Gastrocnemius medialis (tissue), 4 donors: ENCODE measurements at regions of chr10 and their contacts with region 1.

Region 1: DNA sequence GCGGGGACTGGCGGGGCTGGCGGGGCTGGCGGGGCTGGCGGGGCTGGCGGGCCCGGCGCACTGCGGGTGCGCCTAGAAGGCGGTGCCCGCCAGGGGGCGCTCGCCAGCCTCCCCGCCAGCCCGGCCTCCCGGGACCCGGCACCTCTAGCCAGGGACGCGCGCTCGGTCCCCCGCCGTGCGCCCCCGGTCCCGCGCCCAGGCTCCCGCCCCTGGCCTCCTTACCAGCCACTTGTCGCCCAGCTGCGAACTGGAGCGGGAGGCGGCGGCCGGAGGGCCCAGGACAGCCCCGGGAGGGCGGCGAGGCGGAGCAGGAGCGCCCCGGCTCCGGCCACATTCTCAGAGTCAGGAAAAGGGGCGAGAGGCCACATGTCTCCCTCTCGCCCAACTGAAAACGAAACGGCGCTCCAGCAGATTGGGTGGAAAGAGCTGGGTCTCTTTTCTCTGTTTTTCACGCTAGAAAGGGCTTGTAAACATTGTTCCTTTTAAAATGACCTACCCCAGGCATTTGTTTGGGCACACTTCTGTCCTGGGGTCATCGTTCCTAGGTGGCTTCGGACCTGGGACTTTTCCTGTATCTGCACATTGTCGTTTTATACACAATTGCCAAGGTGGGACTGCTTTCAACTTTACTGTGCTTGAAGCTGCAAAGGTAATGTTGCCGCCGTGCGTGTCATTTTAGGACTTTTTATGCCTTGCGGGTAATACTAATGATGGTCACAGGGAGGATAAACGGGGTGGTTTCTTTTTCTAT is 378 bp upstream of the PRKCQ start:
- DNase-seq: peak; percentile 65 to 86
- ATAC-seq: peak; percentile 71 to 72
- H3K4me3 ChIP-seq: peak overlapping the region; percentile 69 to 74 (median 73)
- H3K27ac ChIP-seq: peak overlapping the region; percentile 93 to 96 (median 94)
- H3K4me1 ChIP-seq: peaks cover 15 to 18% of the 10 kb centered on the region in 2 donors
- H3K27me3 ChIP-seq: no peaks in the 10 kb centered on the region
- CTCF ChIP-seq: peak in 4 of 5 experiments; percentile 76 to 92 (median 90)
- POLR2A ChIP-seq: peak; percentile 92

Region 2: GRCh38 chr10:5684318-5684970 is 896.0 kb before region 1 on chr10 and contains the start of gene TASOR2:
- in situ Hi-C with region 1: no loop called
- intact Hi-C with region 1: loop called (anchors 10 kb)
- DNase-seq: peak; percentile 95 to 97
- ATAC-seq: peak; percentile 95 to 96
- H3K4me3 ChIP-seq: peak within 1 kb of the TSS; percentile 72 to 98 (median 90)
- H3K27ac ChIP-seq: peak within 1 kb of the TSS; percentile 88 to 96 (median 92)
- H3K4me1 ChIP-seq: peaks cover 19 to 24% of the 10 kb centered on the region in 2 donors
- H3K27me3 ChIP-seq: no peaks in the 10 kb centered on the region
- CTCF ChIP-seq: no peak
- POLR2A ChIP-seq: peak; percentile 76 to 79
- total RNA-seq, gene TASOR2: 32.0 to 78.0 (median 50.0) TPM

Region 3: DNA sequence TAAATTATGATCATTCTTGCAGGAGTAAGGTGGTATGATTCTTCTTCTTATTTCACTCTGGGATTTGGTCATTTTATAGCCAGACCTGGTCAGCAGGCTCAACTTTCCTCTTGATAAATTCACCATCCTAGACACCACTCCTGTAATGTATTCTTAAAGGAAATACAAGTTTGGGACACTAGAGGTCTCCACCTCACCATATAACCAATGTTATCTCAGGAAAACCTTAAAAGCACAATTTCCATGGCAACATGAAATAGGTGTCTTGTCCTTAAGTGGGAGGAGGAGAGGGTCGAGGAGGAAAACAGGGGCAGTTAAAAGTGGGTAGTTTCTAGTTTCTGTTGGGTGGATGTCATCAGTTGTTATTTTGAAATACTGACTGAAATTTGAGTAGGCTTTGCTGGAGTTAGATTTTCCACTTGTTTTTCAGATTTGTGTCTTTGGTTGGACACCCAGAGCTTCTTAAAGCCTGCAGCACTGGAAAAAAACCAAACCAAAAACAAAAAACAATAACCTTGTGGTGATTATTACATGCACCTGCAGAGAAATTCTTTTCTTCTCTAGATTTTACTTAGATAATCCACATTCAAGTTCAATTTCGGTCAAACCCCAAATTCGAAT is 163.5 kb before region 1 on chr10:
- in situ Hi-C with region 1: no loop called
- intact Hi-C with region 1: loop called (anchors 10 kb)
- DNase-seq: no peak
- ATAC-seq: peak; percentile 52 to 75
- H3K4me3 ChIP-seq: no peak overlapping the region
- H3K27ac ChIP-seq: no peak overlapping the region
- H3K4me1 ChIP-seq: no peaks in the 10 kb centered on the region
- H3K27me3 ChIP-seq: no peaks in the 10 kb centered on the region
- CTCF ChIP-seq: peak; percentile 58 to 70 (median 62)
- POLR2A ChIP-seq: no peak

Region 4: DNA sequence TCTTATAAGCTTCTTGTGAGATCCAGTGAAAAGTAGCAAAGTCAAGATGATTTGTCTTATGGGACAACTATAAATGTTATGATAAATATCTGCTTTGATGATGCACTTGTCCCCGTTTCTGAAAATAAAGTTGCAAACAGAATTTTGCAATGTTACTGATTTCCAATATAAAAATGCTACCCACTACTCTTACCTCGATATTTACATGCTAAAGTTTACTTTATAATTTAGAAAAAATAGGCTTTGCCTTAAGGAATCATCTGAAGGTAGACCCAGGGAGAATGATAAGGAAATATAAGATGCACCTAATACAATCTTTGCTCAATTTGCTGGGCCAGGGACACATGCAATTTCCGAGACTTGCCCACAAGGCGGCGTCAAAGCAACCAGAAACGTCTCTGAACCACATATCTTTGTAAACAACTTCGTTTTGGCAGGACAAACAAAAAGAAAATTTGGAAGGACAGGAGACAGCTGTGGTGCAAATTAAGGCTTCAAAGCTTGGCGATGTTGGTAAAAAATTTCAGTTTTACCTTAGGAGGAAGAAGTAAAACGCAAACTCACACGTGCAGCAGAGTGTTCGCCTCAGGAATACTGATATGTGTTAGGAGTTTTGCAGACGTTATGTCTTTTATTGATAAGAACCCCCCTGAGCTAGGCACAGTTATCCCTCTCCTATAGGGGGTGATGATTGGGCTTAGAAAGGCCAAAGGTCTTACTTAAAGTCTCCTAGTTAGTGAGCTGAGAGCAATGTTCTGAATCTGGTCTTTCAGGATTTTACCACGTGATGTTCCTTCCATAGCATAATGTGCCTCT is 134.7 kb before region 1 on chr10:
- in situ Hi-C with region 1: no loop called
- intact Hi-C with region 1: loop called (anchors 1 kb)
- DNase-seq: peak; percentile 41 to 66
- ATAC-seq: peak; percentile 87 to 94
- H3K4me3 ChIP-seq: peak overlapping the region in 1 of 4 donors; percentile 31
- H3K27ac ChIP-seq: peak overlapping the region; percentile 45 to 83 (median 72)
- H3K4me1 ChIP-seq: peaks cover 8 to 11% of the 10 kb centered on the region in 2 donors
- H3K27me3 ChIP-seq: no peaks in the 10 kb centered on the region
- CTCF ChIP-seq: peak; percentile 49 to 65 (median 58)
- POLR2A ChIP-seq: no peak

Region 5: GRCh38 chr10:6514844-6515780 is 65.3 kb before region 1 on chr10:
- in situ Hi-C with region 1: loop called in 1 of 4 experiments (anchors 5 kb)
- intact Hi-C with region 1: loop called (anchors 1 kb)
- DNase-seq: peak; percentile 36 to 63
- ATAC-seq: peak; percentile 86
- H3K4me3 ChIP-seq: peak overlapping the region; percentile 34 to 50 (median 42)
- H3K27ac ChIP-seq: peak overlapping the region; percentile 88 to 92 (median 90)
- H3K4me1 ChIP-seq: peaks cover 29 to 43% of the 10 kb centered on the region in 2 donors
- H3K27me3 ChIP-seq: no peaks in the 10 kb centered on the region
- CTCF ChIP-seq: no peak
- POLR2A ChIP-seq: peak; percentile 26 to 72

Region 6: GRCh38 chr10:6647811-6648526 is 67.5 kb after region 1 on chr10:
- in situ Hi-C with region 1: loop called in 1 of 4 experiments (anchors 10 kb)
- intact Hi-C with region 1: loop called (anchors 5 kb)
- DNase-seq: peak; percentile 7 to 43
- ATAC-seq: peak; percentile 50 to 74
- H3K4me3 ChIP-seq: no peak overlapping the region
- H3K27ac ChIP-seq: no peak overlapping the region
- H3K4me1 ChIP-seq: no peaks in the 10 kb centered on the region
- H3K27me3 ChIP-seq: no peaks in the 10 kb centered on the region
- CTCF ChIP-seq: peak; percentile 48 to 75 (median 64)
- POLR2A ChIP-seq: no peak

Region 7: GRCh38 chr10:6667679-6668270 is 87.3 kb after region 1 on chr10:
- in situ Hi-C with region 1: no loop called
- intact Hi-C with region 1: loop called (anchors 5 kb)
- DNase-seq: peak in 1 of 2 donors; percentile 17
- ATAC-seq: peak; percentile 74 to 82
- H3K4me3 ChIP-seq: no peak overlapping the region
- H3K27ac ChIP-seq: no peak overlapping the region
- H3K4me1 ChIP-seq: peaks cover 10 to 15% of the 10 kb centered on the region in 2 donors
- H3K27me3 ChIP-seq: no peaks in the 10 kb centered on the region
- CTCF ChIP-seq: peak; percentile 27 to 52 (median 31)
- POLR2A ChIP-seq: no peak

Region 8: GRCh38 chr10:6678211-6678803 is 97.9 kb after region 1 on chr10:
- in situ Hi-C with region 1: no loop called
- intact Hi-C with region 1: no loop called
- DNase-seq: peak in 1 of 2 donors; percentile 27
- ATAC-seq: peak; percentile 52 to 84
- H3K4me3 ChIP-seq: no peak overlapping the region
- H3K27ac ChIP-seq: no peak overlapping the region
- H3K4me1 ChIP-seq: no peaks in the 10 kb centered on the region
- H3K27me3 ChIP-seq: no peaks in the 10 kb centered on the region
- CTCF ChIP-seq: peak; percentile 37 to 67 (median 54)
- POLR2A ChIP-seq: no peak

Region 9: GRCh38 chr10:6688661-6689435 is 108.4 kb after region 1 on chr10:
- in situ Hi-C with region 1: no loop called
- intact Hi-C with region 1: no loop called
- DNase-seq: no peak
- ATAC-seq: no peak
- H3K4me3 ChIP-seq: no peak overlapping the region
- H3K27ac ChIP-seq: no peak overlapping the region
- H3K4me1 ChIP-seq: no peaks in the 10 kb centered on the region
- H3K27me3 ChIP-seq: no peaks in the 10 kb centered on the region
- CTCF ChIP-seq: no peak
- POLR2A ChIP-seq: no peak